HEK293 (cell line): ENCODE measurements at regions of chr11 and their contacts with region 1.

Region 1: DNA sequence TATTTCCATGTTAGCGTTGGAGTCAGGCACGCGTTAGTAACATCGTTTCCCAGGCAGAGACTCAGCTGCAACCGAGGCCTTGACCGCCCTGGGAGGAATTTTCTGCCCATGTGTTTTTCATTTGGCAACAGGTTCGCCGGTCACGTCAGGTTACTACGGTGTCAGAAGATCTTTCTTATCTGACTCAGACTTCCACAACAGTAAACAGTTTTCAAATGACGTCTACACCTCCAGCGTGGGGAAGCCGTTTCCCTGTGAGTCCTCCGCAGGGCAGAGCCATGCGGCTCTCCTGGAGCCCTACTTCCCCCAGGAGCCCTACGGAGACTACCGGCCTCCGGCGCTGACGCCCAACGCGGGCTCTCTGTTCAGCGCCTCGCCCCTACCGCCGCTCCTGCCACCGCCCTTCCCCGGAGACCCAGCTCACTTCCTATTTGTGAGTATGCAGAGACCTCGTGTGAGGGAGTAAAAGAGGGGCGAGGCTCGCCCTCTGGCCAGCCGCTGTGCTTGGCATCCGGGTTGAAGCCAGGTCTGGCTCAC is 14.3 kb upstream of the POU2AF3 start:
- H3K4me3 ChIP-seq: no peak overlapping the region
- H3K27ac ChIP-seq: no peak overlapping the region
- H3K4me1 ChIP-seq: no peaks in the 10 kb centered on the region
- CTCF ChIP-seq: no peak

Region 2: GRCh38 chr11:111299101-111300026 is 15.4 kb after region 1 on chr11:
- CTCF ChIA-PET with region 1: interaction called, 19 read pairs
- POLR2A ChIA-PET with region 1: no interaction called
- H3K4me3 ChIP-seq: peak overlapping the region; percentile 52
- H3K27ac ChIP-seq: peak overlapping the region; percentile 68; the same call in 1 of the 2 replicates
- H3K4me1 ChIP-seq: no peaks in the 10 kb centered on the region
- CTCF ChIP-seq: peak; percentile 39; the same call in 1 of the 2 replicates

Region 3: GRCh38 chr11:111429066-111429506 is 145.1 kb after region 1 on chr11:
- CTCF ChIA-PET with region 1: interaction called, 122 read pairs
- POLR2A ChIA-PET with region 1: no interaction called
- H3K4me3 ChIP-seq: no peak overlapping the region
- H3K27ac ChIP-seq: no peak overlapping the region
- H3K4me1 ChIP-seq: peaks cover 2% of the 10 kb centered on the region; the same call in 1 of the 2 replicates
- CTCF ChIP-seq: no peak

Region 4: GRCh38 chr11:111446404-111447111 is 162.5 kb after region 1 on chr11:
- CTCF ChIA-PET with region 1: interaction called, 57 read pairs
- POLR2A ChIA-PET with region 1: no interaction called
- H3K4me3 ChIP-seq: no peak overlapping the region
- H3K27ac ChIP-seq: no peak overlapping the region
- H3K4me1 ChIP-seq: no peaks in the 10 kb centered on the region
- CTCF ChIP-seq: peak; percentile 81